ENCODE measurements at regions of chr6 and their contacts with region 1.

Region 1: GRCh38 chr6:44268095-44268628 is 2.1 kb upstream of the TMEM151B start:
- DNase-seq: no peak
- ATAC-seq: peak; percentile 34; the same call in 1 of the 2 replicates
- H3K4me3 ChIP-seq: no peak overlapping the region
- H3K27ac ChIP-seq: no peak overlapping the region
- H3K4me1 ChIP-seq: peaks cover 10% of the 10 kb centered on the region
- H3K27me3 ChIP-seq: peaks cover 16% of the 10 kb centered on the region
- CTCF ChIP-seq: peak; percentile 98

Region 2: GRCh38 chr6:43769526-43770416 is 498.4 kb before region 1 on chr6 and contains the start of gene VEGFA:
- CTCF ChIA-PET with region 1: interaction called, 11 read pairs
- POLR2A ChIA-PET with region 1: no interaction called
- in situ Hi-C with region 1: no loop called
- intact Hi-C with region 1: no loop called
- DNase-seq: peak; percentile 64
- ATAC-seq: peak; percentile 71
- H3K4me3 ChIP-seq: peak within 1 kb of the TSS; percentile 94 to 99
- H3K27ac ChIP-seq: peak within 1 kb of the TSS; percentile 87
- H3K4me1 ChIP-seq: peaks cover 23% of the 10 kb centered on the region
- H3K27me3 ChIP-seq: no peaks in the 10 kb centered on the region
- CTCF ChIP-seq: peak; percentile 99
- total RNA-seq, gene VEGFA: 98.7 TPM

Region 3: GRCh38 chr6:44010411-44011349 is 257.5 kb before region 1 on chr6:
- CTCF ChIA-PET with region 1: no interaction called
- POLR2A ChIA-PET with region 1: no interaction called
- in situ Hi-C with region 1: no loop called
- intact Hi-C with region 1: no loop called
- DNase-seq: peak; percentile 80
- ATAC-seq: peak; percentile 93
- H3K4me3 ChIP-seq: no peak overlapping the region
- H3K27ac ChIP-seq: peak overlapping the region; percentile 51
- H3K4me1 ChIP-seq: peaks cover 22% of the 10 kb centered on the region
- H3K27me3 ChIP-seq: no peaks in the 10 kb centered on the region
- CTCF ChIP-seq: no peak

Region 4: GRCh38 chr6:44304282-44305199 is 36.4 kb after region 1 on chr6:
- CTCF ChIA-PET with region 1: interaction called, 18 read pairs
- POLR2A ChIA-PET with region 1: no interaction called
- in situ Hi-C with region 1: no loop called
- intact Hi-C with region 1: loop called (anchors 2 kb)
- DNase-seq: no peak
- ATAC-seq: peak; percentile 64
- H3K4me3 ChIP-seq: no peak overlapping the region
- H3K27ac ChIP-seq: no peak overlapping the region
- H3K4me1 ChIP-seq: no peaks in the 10 kb centered on the region
- H3K27me3 ChIP-seq: no peaks in the 10 kb centered on the region
- CTCF ChIP-seq: peak; percentile 90

Region 5: GRCh38 chr6:44387346-44388133 is 119.4 kb after region 1 on chr6 and contains the start of gene CDC5L:
- CTCF ChIA-PET with region 1: interaction called, 13 read pairs
- POLR2A ChIA-PET with region 1: no interaction called
- in situ Hi-C with region 1: no loop called
- intact Hi-C with region 1: no loop called
- DNase-seq: peak; percentile 99
- ATAC-seq: peak; percentile 97
- H3K4me3 ChIP-seq: peak within 1 kb of the TSS; percentile 91
- H3K27ac ChIP-seq: peak within 1 kb of the TSS; percentile 97
- H3K4me1 ChIP-seq: peaks cover 21% of the 10 kb centered on the region; the same call in 1 of the 2 replicates
- H3K27me3 ChIP-seq: no peaks in the 10 kb centered on the region
- CTCF ChIP-seq: no peak
- total RNA-seq, gene CDC5L: 23.3 TPM

Region 6: GRCh38 chr6:46243754-46244153 is 1975.6 kb after region 1 on chr6:
- CTCF ChIA-PET with region 1: no interaction called
- POLR2A ChIA-PET with region 1: no interaction called
- in situ Hi-C with region 1: no loop called
- intact Hi-C with region 1: no loop called
- DNase-seq: no peak
- ATAC-seq: no peak
- H3K4me3 ChIP-seq: no peak overlapping the region
- H3K27ac ChIP-seq: no peak overlapping the region
- H3K4me1 ChIP-seq: no peaks in the 10 kb centered on the region
- H3K27me3 ChIP-seq: no peaks in the 10 kb centered on the region
- CTCF ChIP-seq: no peak